Panc1 (cell line): ENCODE measurements at regions of chr16 and their contacts with region 1.

Region 1: DNA sequence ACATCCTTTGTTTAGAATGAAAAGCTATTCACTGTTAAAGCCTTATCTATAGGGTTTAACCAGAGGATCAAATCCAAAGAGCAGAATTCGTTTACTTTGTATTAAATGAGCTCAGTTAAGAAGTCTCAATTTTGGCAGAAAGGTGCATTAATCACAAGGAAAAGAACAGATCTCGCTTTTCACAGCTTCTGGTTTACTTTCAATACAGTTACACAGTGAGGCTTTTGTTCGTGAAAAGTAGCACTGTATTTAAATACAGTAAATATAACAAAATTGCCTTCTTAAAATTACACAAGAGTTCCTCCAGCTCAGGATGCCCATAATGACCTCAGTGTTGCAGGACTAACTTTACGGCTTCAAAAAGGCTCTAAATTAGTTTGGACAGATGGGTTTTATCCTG is 669.1 kb upstream of the SALL1 start:
- DNase-seq: no peak
- ATAC-seq: no peak
- H3K4me3 ChIP-seq: no peak overlapping the region
- H3K27ac ChIP-seq: no peak overlapping the region
- H3K4me1 ChIP-seq: no peaks in the 10 kb centered on the region
- H3K27me3 ChIP-seq: no peaks in the 10 kb centered on the region
- CTCF ChIP-seq: no peak

Region 2: DNA sequence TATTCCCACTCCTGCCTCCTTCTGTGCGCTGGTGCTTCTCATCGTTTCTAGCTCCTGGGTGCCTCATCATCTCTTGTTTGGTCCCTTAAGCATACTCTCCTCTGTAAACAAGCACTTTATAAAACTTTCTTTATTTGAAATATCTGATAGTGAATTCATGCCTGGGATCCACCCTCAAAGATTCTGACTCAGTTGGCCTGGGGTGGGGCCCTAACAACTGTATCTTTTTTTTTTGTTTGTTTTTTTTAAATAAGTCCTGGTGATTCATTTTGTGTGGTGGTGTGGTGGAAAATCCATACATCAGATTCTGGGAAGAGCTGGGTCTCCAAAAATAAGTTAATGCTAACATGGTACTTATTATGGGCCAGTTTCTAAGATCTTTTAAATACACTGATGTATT is 48.5 kb after region 1 on chr16:
- CTCF ChIA-PET with region 1: no interaction called
- POLR2A ChIA-PET with region 1: no interaction called
- in situ Hi-C with region 1: no loop called
- intact Hi-C with region 1: no loop called
- DNase-seq: no peak
- ATAC-seq: no peak
- H3K4me3 ChIP-seq: no peak overlapping the region
- H3K27ac ChIP-seq: no peak overlapping the region
- H3K4me1 ChIP-seq: no peaks in the 10 kb centered on the region
- H3K27me3 ChIP-seq: no peaks in the 10 kb centered on the region
- CTCF ChIP-seq: no peak

Region 3: GRCh38 chr16:51982715-51983680 is 162.8 kb after region 1 on chr16:
- CTCF ChIA-PET with region 1: no interaction called
- POLR2A ChIA-PET with region 1: no interaction called
- in situ Hi-C with region 1: no loop called
- intact Hi-C with region 1: loop called (anchors 5 kb)
- DNase-seq: peak; percentile 52
- ATAC-seq: no peak
- H3K4me3 ChIP-seq: no peak overlapping the region
- H3K27ac ChIP-seq: no peak overlapping the region
- H3K4me1 ChIP-seq: no peaks in the 10 kb centered on the region
- H3K27me3 ChIP-seq: no peaks in the 10 kb centered on the region
- CTCF ChIP-seq: peak; percentile 67